ENCODE measurements at regions of chr3 and their contacts with region 1.

Region 1: DNA sequence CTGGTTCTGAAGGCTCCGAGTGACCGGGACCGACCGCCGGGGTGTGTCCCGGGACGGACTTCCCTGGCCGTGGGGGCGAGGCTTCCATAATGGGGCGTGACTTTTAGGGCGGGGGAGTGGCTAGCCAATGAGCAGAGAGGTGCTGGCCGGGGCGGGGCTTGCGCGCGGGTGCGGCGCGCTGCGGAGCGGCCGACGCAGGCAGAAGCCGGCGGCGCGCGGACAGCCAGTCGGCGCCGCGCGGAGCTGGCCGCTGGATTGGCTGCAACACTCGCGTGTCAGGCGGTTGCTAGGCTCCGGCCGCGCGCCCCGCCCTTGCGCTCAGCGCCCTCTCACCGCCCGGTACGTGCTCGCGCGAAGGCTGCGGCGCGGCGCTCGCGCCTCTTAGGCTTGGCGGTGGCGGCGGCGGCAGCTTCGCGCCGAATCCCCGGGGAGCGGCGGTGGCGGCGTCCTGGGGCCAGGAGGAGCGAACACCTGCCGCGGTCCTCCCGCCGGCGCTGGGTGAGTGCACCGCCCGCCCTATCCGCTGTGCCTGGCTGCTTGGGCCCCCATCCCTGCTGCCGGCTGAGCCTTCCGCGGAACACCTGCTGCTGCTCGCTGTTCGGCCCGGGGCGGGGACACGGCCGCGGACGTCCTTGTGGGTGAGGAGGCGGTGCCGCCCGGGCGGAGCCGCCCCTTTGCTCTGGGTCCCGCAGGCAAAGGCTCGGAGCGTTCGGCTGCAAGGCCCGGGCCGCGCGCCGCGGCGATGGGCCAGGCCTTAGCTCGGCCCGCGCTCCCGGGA is at the start of gene DAG1:
- DNase-seq: peak; percentile 98
- ATAC-seq: peak; percentile 83
- H3K4me3 ChIP-seq: peak within 1 kb of the TSS; percentile 56 to 94 (median 70)
- H3K4me3 Mint-ChIP-seq: peak within 1 kb of the TSS; percentile 95
- H3K27ac ChIP-seq: peak within 1 kb of the TSS; percentile 90 to 94
- H3K27ac Mint-ChIP-seq: peak within 1 kb of the TSS; percentile 97
- H3K4me1 ChIP-seq: peaks cover 22 to 24% of the 10 kb centered on the region in 2 donors
- H3K4me1 Mint-ChIP-seq: peaks cover 21% of the 10 kb centered on the region
- H3K27me3 ChIP-seq: no peaks in the 10 kb centered on the region
- H3K27me3 Mint-ChIP-seq: no peaks in the 10 kb centered on the region
- CTCF ChIP-seq: no peak
- total RNA-seq, gene DAG1: 27.2 and 27.3 TPM in 2 replicates

Region 2: DNA sequence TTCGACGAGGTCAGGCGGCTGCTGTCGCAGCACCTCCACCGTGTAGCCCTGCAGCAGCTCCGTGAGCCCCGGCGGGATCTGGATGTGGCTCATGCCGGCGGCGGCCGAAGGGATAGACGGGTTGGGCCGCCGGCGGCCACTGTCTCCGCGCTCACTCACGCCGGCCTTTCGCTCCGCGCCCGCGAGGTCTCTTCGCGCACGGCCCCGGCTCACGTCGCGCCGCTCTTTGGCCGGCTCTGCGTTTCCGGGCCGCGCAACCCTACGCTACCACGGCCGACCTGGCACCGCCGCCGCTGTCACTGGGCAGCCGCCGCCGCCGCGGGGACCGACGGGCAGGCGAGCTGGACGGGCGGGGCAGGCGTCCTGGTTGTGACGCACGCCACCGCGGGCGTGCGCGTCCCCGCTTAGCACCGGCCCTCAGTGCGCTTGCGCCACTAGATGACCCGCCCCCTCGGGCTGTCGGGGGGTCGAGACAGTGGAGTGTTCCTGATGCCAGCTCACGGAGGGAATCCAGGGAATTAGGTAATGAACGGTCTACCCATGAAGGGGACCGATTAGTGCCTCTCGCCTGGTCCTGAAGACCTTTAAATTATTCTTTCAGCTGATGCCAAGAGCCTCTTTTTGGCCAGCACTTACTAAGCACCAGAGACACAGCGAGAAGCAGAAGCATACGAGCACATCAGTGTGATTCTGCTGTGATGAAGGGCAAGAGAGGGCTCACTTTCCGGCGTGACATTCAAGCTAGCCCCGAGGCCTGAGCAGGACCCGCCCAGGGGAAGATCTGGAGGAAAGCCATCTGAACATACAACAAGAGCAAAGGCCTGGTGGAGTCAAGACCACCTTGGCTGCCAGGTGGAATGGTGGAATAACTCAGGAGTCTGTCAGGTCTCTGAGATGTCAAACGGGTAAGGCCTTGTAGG is 622.4 kb before region 1 on chr3 and contains the start of gene PRKAR2A:
- CTCF ChIA-PET with region 1: no interaction called
- POLR2A ChIA-PET with region 1: no interaction called
- intact Hi-C with region 1: loop called (anchors 10 kb)
- DNase-seq: peak; percentile 93
- ATAC-seq: peak; percentile 95
- H3K4me3 ChIP-seq: peak within 1 kb of the TSS; percentile 67 to 88 (median 80)
- H3K4me3 Mint-ChIP-seq: peak within 1 kb of the TSS; percentile 96
- H3K27ac ChIP-seq: peak within 1 kb of the TSS; percentile 68 to 89
- H3K27ac Mint-ChIP-seq: peak within 1 kb of the TSS; percentile 96
- H3K4me1 ChIP-seq: peaks cover 16 to 25% of the 10 kb centered on the region in 2 donors
- H3K4me1 Mint-ChIP-seq: peaks cover 28% of the 10 kb centered on the region
- H3K27me3 ChIP-seq: no peaks in the 10 kb centered on the region
- H3K27me3 Mint-ChIP-seq: no peaks in the 10 kb centered on the region
- CTCF ChIP-seq: no peak
- total RNA-seq, gene PRKAR2A: 25.0 and 27.5 TPM in 2 replicates

Region 3: DNA sequence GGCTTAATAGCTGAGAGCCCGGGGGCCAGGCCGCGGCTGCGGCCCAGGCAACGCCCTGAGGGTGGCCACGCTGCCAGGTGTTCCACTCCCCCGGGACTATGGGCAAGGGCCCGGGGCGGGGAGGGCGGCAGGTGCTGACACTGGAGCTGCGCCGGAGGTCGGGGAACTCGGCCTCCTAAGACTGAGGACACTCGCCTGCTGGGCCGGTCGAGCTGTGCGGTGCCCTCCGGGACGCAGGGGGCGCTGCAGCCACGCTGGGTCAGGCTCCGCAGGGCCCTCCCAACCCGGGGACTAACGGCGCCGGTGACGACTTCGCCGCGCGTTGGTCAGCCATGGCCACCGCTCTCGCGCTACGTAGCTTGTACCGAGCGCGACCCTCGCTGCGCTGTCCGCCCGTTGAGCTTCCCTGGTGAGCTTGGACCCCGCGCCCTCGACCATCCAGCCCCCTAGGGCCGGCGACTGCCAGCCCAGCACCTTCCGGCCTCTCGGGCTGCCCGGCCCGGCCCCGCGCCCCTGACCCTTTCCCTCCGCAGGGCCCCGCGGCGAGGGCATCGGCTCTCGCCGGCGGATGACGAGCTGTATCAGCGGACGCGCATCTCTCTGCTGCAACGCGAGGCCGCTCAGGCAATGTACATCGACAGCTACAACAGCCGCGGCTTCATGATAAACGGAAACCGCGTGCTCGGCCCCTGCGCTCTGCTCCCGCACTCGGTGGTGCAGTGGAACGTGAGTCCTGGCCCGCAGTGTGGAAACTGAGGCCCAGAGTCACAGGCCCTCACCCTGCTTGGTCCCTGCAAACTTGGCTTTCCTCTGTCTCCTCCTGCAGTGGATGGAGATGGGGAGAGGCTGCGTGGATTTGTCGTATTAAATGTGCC is 448.1 kb before region 1 on chr3 and contains the start of gene NDUFAF3:
- CTCF ChIA-PET with region 1: no interaction called
- POLR2A ChIA-PET with region 1: no interaction called
- intact Hi-C with region 1: loop called (anchors 2 kb)
- DNase-seq: peak; percentile 96
- ATAC-seq: peak; percentile 66
- H3K4me3 ChIP-seq: peak within 1 kb of the TSS; percentile 66 to 92 (median 89)
- H3K4me3 Mint-ChIP-seq: peak within 1 kb of the TSS; percentile 96
- H3K27ac ChIP-seq: peak within 1 kb of the TSS; percentile 96 to 98
- H3K27ac Mint-ChIP-seq: peak within 1 kb of the TSS; percentile 97
- H3K4me1 ChIP-seq: peaks cover 36 to 60% of the 10 kb centered on the region in 2 donors
- H3K4me1 Mint-ChIP-seq: peaks cover 65% of the 10 kb centered on the region
- H3K27me3 ChIP-seq: no peaks in the 10 kb centered on the region
- H3K27me3 Mint-ChIP-seq: no peaks in the 10 kb centered on the region
- CTCF ChIP-seq: peak; percentile 95
- total RNA-seq, gene NDUFAF3: 67.0 and 67.5 TPM in 2 replicates

Region 4: DNA sequence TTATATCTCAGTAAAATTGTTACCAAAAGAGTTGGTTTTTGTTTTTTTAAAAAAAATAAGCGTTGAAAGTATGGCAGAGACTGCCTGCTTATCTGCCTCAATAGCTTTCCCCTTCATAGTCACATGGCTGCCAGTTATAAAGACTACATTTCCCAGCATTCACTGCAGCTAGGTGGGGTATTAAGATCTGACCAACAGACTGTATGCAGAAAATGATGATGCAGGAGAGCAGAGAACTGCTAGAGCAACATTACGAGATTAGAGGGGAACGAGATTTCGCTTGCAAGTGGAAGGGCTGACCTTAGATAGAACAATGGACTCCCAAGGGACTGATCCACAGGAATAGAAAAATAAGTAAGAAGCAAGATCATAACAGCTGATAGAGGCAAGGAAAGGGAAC is 72.7 kb before region 1 on chr3:
- CTCF ChIA-PET with region 1: no interaction called
- POLR2A ChIA-PET with region 1: no interaction called
- intact Hi-C with region 1: no loop called
- DNase-seq: peak; percentile 48
- ATAC-seq: peak; percentile 64
- H3K4me3 ChIP-seq: no peak overlapping the region
- H3K4me3 Mint-ChIP-seq: no peak overlapping the region
- H3K27ac ChIP-seq: peak overlapping the region in 1 of 2 donors; percentile 27
- H3K27ac Mint-ChIP-seq: peak overlapping the region; percentile 4
- H3K4me1 ChIP-seq: peaks cover 40 to 63% of the 10 kb centered on the region in 2 donors
- H3K4me1 Mint-ChIP-seq: peaks cover 67% of the 10 kb centered on the region
- H3K27me3 ChIP-seq: no peaks in the 10 kb centered on the region
- H3K27me3 Mint-ChIP-seq: no peaks in the 10 kb centered on the region
- CTCF ChIP-seq: no peak

Region 5: DNA sequence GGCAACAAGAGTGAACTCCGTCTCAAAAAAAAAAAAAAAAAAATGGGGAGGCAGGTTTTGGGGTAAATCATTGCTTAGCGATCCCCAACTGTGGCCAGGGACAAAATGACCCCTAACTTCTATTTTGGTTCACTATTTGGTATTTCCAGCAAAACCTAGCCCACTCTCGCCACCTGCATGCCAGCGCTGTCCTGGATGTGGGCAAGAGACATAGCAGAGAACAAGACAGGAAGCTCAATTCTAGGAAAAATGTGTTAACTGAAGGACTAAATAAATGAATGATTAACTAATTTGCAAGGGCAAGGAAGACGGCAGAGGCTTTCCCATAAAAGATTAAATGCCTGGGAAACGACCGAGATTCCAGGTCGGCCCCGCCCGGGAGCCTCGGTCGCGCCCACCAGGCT is 41.4 kb before region 1 on chr3:
- CTCF ChIA-PET with region 1: no interaction called
- POLR2A ChIA-PET with region 1: interaction called, 8 read pairs
- intact Hi-C with region 1: loop called (anchors 1 kb)
- DNase-seq: no peak
- ATAC-seq: no peak
- H3K4me3 ChIP-seq: peak overlapping the region; percentile 47 to 77 (median 72)
- H3K4me3 Mint-ChIP-seq: peak overlapping the region; percentile 91
- H3K27ac ChIP-seq: peak overlapping the region; percentile 77 to 89
- H3K27ac Mint-ChIP-seq: peak overlapping the region; percentile 94
- H3K4me1 ChIP-seq: peaks cover 7 to 11% of the 10 kb centered on the region in 2 donors
- H3K4me1 Mint-ChIP-seq: peaks cover 11% of the 10 kb centered on the region
- H3K27me3 ChIP-seq: no peaks in the 10 kb centered on the region
- H3K27me3 Mint-ChIP-seq: no peaks in the 10 kb centered on the region
- CTCF ChIP-seq: no peak

Region 6: DNA sequence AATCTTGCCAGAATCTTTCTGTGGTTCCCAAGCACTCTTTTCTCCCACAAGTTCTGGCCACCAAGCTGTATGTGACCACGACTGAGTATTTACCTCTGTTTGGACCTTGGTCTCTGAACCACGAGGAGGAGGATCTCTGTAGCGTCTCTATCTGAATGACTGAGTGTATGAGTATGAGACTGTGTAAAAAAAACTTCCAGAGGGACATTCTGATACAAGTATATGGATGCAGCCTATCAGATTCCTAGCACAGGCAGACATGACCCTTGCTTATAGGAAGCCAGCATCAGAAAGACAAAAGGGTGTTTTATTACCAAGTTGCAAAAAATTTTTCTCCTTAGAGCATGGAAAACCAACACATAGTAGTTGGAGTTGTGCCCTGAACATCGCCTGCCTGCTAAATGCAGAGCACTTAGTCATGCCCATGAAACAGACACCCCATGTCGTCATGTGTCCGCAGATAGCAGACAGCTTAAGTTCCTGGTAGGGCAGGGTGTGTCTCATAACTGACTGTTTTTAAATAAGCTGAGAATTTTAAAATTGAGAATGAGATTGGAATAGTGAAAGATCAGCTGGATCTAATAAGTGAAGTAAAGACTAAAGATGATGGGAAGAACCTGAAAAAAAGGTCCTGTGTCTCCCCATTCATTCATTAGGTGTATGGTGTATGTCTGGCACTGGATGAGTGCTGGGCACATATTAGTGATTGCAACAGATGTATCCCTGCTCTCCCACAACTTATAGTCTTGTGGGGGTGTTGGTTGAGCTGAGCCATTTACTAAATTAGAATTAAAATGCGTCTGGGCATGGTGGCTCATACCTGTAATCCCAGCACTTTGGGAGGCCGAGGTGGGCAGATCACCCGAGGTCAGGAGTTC is 30.8 kb after region 1 on chr3:
- CTCF ChIA-PET with region 1: no interaction called
- POLR2A ChIA-PET with region 1: no interaction called
- intact Hi-C with region 1: no loop called
- DNase-seq: no peak
- ATAC-seq: no peak
- H3K4me3 ChIP-seq: no peak overlapping the region
- H3K4me3 Mint-ChIP-seq: no peak overlapping the region
- H3K27ac ChIP-seq: no peak overlapping the region
- H3K27ac Mint-ChIP-seq: no peak overlapping the region
- H3K4me1 ChIP-seq: peaks cover 0 to 3% of the 10 kb centered on the region in 2 donors
- H3K4me1 Mint-ChIP-seq: peaks cover 11% of the 10 kb centered on the region
- H3K27me3 ChIP-seq: no peaks in the 10 kb centered on the region
- H3K27me3 Mint-ChIP-seq: no peaks in the 10 kb centered on the region
- CTCF ChIP-seq: no peak

Region 7: DNA sequence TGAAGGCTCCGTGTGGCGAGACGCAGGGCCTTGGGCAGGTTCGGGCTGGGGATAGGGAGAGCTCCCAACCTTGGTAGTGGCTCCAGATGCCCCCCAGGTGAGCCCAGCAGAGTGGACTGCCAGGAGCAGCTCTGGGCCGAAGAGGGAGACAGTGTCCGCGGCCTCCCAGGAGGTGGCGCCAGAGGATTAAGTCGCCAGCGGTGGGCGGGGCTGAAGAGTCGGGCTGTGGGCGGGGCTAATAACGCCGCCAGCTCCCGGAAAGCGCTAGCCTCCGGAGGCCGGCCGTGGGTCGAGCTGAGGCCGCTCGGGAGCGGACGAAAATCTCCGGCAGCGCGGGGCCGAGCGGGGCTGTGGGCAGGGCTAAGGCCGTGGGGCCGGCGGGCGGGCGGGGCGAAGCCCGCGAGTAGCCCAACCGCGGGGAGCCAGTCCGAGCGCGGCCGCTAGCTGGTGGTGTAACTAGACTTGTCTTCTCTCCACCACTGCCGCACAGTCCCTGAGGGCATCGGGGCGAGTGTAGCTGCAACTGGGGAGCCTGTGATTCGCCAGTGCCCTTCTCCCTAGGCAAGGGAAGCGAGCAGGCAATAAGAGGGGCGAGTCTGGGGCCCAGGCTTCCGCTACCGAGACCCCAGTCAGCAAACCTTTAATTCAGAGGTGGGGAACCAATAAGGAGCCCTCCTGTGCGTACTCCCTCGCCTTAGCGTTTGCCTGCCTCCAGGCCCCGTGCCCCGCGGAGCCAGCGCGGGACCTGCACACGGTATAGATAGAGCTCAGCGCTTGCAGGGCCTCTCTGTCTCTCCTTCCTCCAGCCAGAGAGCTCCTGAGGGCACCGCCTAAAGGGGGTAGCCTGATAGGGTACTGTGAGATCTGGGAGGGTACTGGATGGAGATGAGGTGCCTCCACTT is 69.8 kb after region 1 on chr3:
- CTCF ChIA-PET with region 1: interaction called, 10 read pairs
- POLR2A ChIA-PET with region 1: interaction called, 5 read pairs
- intact Hi-C with region 1: loop called (anchors 1 kb)
- DNase-seq: peak; percentile 93
- ATAC-seq: peak; percentile 94
- H3K4me3 ChIP-seq: peak overlapping the region; percentile 19 to 82 (median 63)
- H3K4me3 Mint-ChIP-seq: peak overlapping the region; percentile 84
- H3K27ac ChIP-seq: peak overlapping the region; percentile 16 to 63
- H3K27ac Mint-ChIP-seq: peak overlapping the region; percentile 68
- H3K4me1 ChIP-seq: peaks cover 0 to 6% of the 10 kb centered on the region in 2 donors
- H3K4me1 Mint-ChIP-seq: peaks cover 7% of the 10 kb centered on the region
- H3K27me3 ChIP-seq: peaks cover 0 to 4% (median 0%) of the 10 kb centered on the region in 4 experiments
- H3K27me3 Mint-ChIP-seq: peaks cover 19% of the 10 kb centered on the region
- CTCF ChIP-seq: peak; percentile 92

Region 8: GRCh38 chr3:49727154-49727923 is 257.2 kb after region 1 on chr3:
- CTCF ChIA-PET with region 1: no interaction called
- POLR2A ChIA-PET with region 1: no interaction called
- intact Hi-C with region 1: no loop called
- DNase-seq: peak; percentile 50
- ATAC-seq: no peak
- H3K4me3 ChIP-seq: no peak overlapping the region
- H3K4me3 Mint-ChIP-seq: no peak overlapping the region
- H3K27ac ChIP-seq: peak overlapping the region; percentile 63 to 100
- H3K27ac Mint-ChIP-seq: peak overlapping the region; percentile 97
- H3K4me1 ChIP-seq: peaks cover 25 to 49% of the 10 kb centered on the region in 2 donors
- H3K4me1 Mint-ChIP-seq: peaks cover 41% of the 10 kb centered on the region
- H3K27me3 ChIP-seq: no peaks in the 10 kb centered on the region
- H3K27me3 Mint-ChIP-seq: no peaks in the 10 kb centered on the region
- CTCF ChIP-seq: no peak